ENCODE measurements at regions of chr18 and their contacts with region 1.

Region 1: DNA sequence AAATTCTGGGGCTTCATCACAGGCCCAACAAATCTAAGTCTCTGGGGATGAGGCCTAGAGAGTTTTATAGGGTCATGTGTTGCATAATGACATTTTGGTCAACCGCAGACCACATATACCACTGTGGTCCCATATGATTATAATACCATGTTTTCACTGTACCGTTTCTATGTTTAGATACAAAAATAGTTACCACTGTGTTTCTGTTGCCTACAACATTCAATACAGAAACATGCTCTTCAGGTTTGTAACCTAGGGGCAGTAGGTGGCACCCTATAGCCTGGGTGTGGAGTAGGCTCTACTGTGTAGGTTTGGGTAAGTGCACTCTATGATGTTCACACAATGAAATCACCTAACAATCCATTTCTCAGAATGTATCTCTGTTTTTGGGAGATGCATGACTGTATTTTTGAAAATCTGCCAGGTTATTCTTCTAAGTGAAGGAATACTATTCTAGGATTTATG is 485.2 kb downstream of the PTPRM start:
- DNase-seq: no peak
- H3K4me3 Mint-ChIP-seq: no peak overlapping the region
- H3K27ac Mint-ChIP-seq: no peak overlapping the region
- H3K4me1 Mint-ChIP-seq: peaks cover 16% of the 10 kb centered on the region
- H3K27me3 Mint-ChIP-seq: no peaks in the 10 kb centered on the region

Region 2: GRCh38 chr18:7566567-7567473 is 485.4 kb before region 1 on chr18 and contains the start of gene PTPRM:
- CTCF ChIA-PET with region 1: no interaction called
- POLR2A ChIA-PET with region 1: no interaction called
- intact Hi-C with region 1: loop called (anchors 10 kb)
- DNase-seq: peak; percentile 57
- H3K4me3 Mint-ChIP-seq: no peak within 1 kb of the TSS
- H3K27ac Mint-ChIP-seq: no peak within 1 kb of the TSS
- H3K4me1 Mint-ChIP-seq: peaks cover 2% of the 10 kb centered on the region
- H3K27me3 Mint-ChIP-seq: peaks cover 42% of the 10 kb centered on the region
- total RNA-seq, gene PTPRM: 7.0 to 8.6 TPM

Region 3: DNA sequence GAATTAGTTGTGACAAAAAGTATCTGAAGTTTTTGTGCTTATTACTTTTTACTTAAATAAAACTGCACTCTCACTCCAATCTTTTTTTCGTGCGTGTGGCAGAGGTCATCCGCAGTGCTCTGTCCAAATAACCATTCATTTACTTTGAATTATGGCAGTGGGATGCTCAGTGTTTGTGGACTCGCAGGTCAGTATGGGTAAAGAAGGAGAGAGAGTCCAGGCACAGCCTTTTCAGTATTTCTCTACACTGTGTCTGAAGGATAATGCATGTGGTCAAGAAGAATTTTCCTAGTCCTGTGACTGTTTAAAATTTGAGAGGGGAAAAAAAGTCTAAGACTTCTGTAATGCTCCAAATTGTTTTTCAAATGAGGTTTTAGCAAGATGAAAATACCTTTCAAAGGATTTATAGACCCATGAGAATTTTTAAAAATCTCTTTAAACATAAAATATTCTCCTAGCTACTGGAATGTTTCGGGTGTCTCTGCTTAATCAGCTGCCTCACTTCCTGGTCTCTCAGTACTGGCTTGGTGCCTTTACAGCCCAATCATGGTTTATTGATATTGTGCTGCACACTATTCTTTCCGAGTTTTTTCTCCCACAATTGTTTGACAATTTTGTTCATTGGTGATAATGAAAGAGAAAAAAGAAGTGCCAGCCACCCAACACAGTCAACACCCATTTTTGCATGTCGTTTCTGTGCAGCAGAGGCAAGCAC is 32.0 kb before region 1 on chr18:
- CTCF ChIA-PET with region 1: no interaction called
- POLR2A ChIA-PET with region 1: no interaction called
- intact Hi-C with region 1: no loop called
- DNase-seq: no peak
- H3K4me3 Mint-ChIP-seq: no peak overlapping the region
- H3K27ac Mint-ChIP-seq: no peak overlapping the region
- H3K4me1 Mint-ChIP-seq: no peaks in the 10 kb centered on the region
- H3K27me3 Mint-ChIP-seq: no peaks in the 10 kb centered on the region

Region 4: GRCh38 chr18:8091035-8091434 is 38.8 kb after region 1 on chr18:
- CTCF ChIA-PET with region 1: no interaction called
- POLR2A ChIA-PET with region 1: no interaction called
- intact Hi-C with region 1: no loop called
- DNase-seq: no peak
- H3K4me3 Mint-ChIP-seq: no peak overlapping the region
- H3K27ac Mint-ChIP-seq: no peak overlapping the region
- H3K4me1 Mint-ChIP-seq: no peaks in the 10 kb centered on the region
- H3K27me3 Mint-ChIP-seq: no peaks in the 10 kb centered on the region

Region 5: DNA sequence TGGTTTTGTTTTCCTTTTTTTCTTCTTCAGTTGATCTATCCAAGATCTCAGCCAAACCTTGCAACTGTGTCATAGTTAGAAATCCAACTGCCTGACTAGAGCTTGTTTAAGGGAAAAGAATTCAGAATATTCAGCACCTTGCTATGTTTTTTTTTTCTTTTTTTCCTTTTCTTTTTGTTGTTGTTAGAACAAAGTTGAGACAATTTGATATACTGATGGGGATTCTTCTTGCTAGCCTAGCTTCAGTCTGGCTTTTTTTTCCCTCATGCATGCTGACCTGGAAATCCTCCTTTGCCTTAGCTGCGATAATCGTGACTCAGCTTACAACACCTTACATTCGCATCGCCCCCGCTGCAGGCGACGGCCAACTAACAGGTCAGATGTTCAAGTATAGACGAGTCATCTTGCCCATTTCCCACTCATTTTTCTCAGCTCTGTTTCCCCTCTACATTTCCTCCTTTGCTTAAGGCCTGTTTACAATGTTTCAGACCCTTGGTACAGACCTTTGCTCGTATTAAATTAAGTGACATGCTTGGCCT is 69.7 kb after region 1 on chr18:
- CTCF ChIA-PET with region 1: no interaction called
- POLR2A ChIA-PET with region 1: no interaction called
- intact Hi-C with region 1: no loop called
- DNase-seq: no peak
- H3K4me3 Mint-ChIP-seq: no peak overlapping the region
- H3K27ac Mint-ChIP-seq: no peak overlapping the region
- H3K4me1 Mint-ChIP-seq: no peaks in the 10 kb centered on the region
- H3K27me3 Mint-ChIP-seq: no peaks in the 10 kb centered on the region

Region 6: GRCh38 chr18:8389391-8390340 is 337.4 kb after region 1 on chr18:
- CTCF ChIA-PET with region 1: no interaction called
- POLR2A ChIA-PET with region 1: no interaction called
- intact Hi-C with region 1: loop called (anchors 5 kb)
- DNase-seq: peak; percentile 58
- H3K4me3 Mint-ChIP-seq: no peak overlapping the region
- H3K27ac Mint-ChIP-seq: no peak overlapping the region
- H3K4me1 Mint-ChIP-seq: no peaks in the 10 kb centered on the region
- H3K27me3 Mint-ChIP-seq: no peaks in the 10 kb centered on the region